ENCODE measurements at regions of chr10 and their contacts with region 1.

Region 1: DNA sequence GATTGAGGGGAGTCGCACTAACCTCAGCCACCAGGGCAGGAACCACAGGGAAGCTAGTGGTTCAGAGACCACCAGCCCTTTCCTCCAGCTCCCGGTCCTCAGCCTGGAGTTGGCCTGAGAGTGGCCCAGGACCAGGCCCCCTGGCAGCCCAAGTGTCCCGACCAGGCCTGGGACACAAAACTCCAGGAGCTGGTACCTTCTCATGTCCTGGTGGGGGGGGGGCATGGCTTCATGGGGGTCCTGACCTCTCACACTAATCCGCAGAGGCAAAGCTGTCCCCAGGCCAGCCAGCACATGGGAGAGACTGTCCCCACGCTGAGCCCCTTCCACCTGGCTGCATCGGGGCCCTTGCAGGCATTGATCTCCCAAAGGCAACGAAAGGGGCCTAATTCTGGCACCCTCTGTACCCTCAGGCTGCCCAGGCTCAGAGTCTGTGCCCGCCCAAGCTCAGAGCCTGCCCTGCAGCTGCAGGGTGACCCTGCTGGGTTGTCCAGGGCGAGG is 28.2 kb downstream of the GPRIN2 start:
- DNase-seq: peak in 3 of 5 donors; percentile 21 to 53 (median 38)
- ATAC-seq: peak in 2 of 4 donors; percentile 8 to 15
- H3K4me3 ChIP-seq: no peak overlapping the region
- H3K27ac ChIP-seq: no peak overlapping the region
- H3K4me1 ChIP-seq: peaks cover 0 to 7% (median 0%) of the 10 kb centered on the region in 12 donors
- H3K27me3 ChIP-seq: peaks cover 0 to 20% (median 0%) of the 10 kb centered on the region in 9 donors
- CTCF ChIP-seq: no peak
- POLR2A ChIP-seq: no peak

Region 2: GRCh38 chr10:46544989-46545791 is 17.0 kb after region 1 on chr10:
- intact Hi-C with region 1: loop called in 1 of 10 experiments (anchors 2 kb)
- DNase-seq: peak in 4 of 5 donors; percentile 5 to 56 (median 19)
- ATAC-seq: no peak
- H3K4me3 ChIP-seq: no peak overlapping the region
- H3K27ac ChIP-seq: no peak overlapping the region
- H3K4me1 ChIP-seq: peaks cover 0 to 9% (median 0%) of the 10 kb centered on the region in 12 donors
- H3K27me3 ChIP-seq: peaks cover 0 to 60% (median 17%) of the 10 kb centered on the region in 9 donors
- CTCF ChIP-seq: peak in 4 of 12 donors; percentile 5 to 12 (median 10)
- POLR2A ChIP-seq: no peak

Region 3: DNA sequence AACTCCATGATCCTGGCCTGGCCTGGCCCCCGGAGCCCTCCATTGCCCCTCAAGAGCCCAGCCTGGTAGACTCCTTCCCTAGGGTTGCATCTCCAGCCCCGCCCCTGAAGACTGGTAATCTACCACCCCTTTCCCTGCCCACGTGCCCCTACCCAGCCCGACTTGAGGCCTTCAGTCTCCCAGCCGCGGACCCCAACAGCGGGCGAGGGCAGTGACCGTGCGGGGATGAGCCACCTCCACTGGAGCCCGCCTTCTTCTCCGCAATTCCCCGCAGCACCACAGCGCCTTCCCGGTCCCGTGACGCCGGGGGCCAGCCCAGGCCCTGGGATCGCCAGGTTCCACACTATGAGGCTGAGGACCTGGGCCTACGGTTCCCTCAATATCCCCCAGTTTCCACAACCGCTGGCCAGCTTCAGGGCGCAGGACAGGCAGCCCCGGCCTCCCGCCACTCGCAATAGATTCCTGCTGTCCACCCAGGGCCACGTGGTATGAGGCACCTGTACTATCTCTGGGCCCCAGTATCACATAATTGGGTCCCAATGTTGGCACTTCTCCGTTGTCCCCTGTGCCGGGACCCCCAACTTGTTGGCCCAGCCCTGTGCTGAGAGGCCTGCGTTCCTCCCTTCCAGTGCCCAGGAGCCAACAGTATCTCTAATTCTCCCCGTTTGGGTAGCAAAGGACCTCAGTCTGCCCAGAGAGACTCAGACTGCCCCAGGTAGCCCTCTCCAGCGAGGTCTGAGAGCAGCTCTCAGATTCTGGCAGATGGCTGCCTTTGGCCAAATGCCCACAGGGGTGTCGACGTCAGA is 29.3 kb after region 1 on chr10:
- intact Hi-C with region 1: no loop called
- DNase-seq: peak; percentile 16 to 69 (median 25)
- ATAC-seq: no peak
- H3K4me3 ChIP-seq: peak overlapping the region in 1 of 12 donors; percentile 0
- H3K27ac ChIP-seq: no peak overlapping the region
- H3K4me1 ChIP-seq: peaks cover 0 to 13% (median 3%) of the 10 kb centered on the region in 12 donors
- H3K27me3 ChIP-seq: peaks cover 38 to 86% (median 63%) of the 10 kb centered on the region in 9 donors
- CTCF ChIP-seq: no peak
- POLR2A ChIP-seq: no peak

Measured in heart left ventricle (tissue), 16 donors.